Activated B cell treated with CpG ODN at 0.5 μM for 24 hours (primary cell): ENCODE measurements at regions of chr3 and their contacts with region 1.

Region 1: DNA sequence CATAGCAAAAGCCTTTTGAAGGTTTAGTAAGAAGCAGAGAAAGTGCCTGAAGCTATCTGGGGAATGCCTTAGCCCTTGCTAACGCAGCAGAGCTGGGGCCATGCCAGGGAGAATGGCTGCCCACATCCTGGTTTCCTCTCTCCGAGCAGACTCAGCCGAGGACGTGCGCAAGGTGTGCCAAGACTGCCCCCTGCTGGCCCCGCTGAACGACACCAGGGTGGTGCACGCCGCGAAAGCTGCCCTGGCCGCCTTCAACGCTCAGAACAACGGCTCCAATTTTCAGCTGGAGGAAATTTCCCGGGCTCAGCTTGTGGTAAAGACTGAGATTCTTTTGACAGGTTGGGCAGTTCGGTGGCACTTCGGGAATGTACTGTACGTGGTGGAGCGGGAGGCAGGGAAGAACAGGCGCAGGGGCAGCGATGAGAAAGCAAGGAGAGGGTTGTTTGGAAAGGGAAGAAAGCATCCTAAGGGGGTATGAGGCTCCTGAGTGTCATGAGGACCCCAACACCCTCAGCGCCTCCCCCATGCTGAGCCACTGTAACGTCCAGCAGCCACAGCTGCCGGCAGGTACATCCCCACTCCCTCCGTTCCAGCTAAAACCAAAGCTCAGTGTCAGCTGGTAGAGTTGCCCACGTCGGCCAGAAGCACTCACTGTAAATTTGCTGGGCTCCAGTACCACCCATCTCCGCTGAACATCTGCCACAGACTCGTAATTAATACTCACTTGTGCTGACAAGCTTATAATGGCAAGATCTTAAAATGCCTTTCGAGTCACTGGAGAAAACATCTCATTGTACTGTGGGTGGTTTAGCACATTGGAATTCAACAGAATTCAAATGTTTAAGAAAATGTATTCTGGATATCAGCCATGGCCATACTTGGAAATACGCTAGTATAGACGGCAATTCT is 4.4 kb downstream of the AHSG start:
- DNase-seq: peak; percentile 65
- ATAC-seq: peak; percentile 97
- H3K4me3 Mint-ChIP-seq: peak overlapping the region; percentile 58
- H3K27ac Mint-ChIP-seq: no peak overlapping the region
- H3K4me1 Mint-ChIP-seq: peaks cover 16% of the 10 kb centered on the region
- H3K27me3 Mint-ChIP-seq: peaks cover 43% of the 10 kb centered on the region
- CTCF ChIP-seq: peak; percentile 47

Region 2: GRCh38 chr3:185942907-185943759 is 674.2 kb before region 1 on chr3:
- CTCF ChIA-PET with region 1: interaction called, 31 read pairs
- POLR2A ChIA-PET with region 1: no interaction called
- intact Hi-C with region 1: loop called (anchors 1 kb)
- DNase-seq: peak; percentile 78
- ATAC-seq: peak; percentile 99
- H3K4me3 Mint-ChIP-seq: peak overlapping the region; percentile 58
- H3K27ac Mint-ChIP-seq: peak overlapping the region; percentile 61
- H3K4me1 Mint-ChIP-seq: peaks cover 16% of the 10 kb centered on the region
- H3K27me3 Mint-ChIP-seq: peaks cover 7% of the 10 kb centered on the region
- CTCF ChIP-seq: peak; percentile 99

Region 3: GRCh38 chr3:185983495-185984141 is 633.7 kb before region 1 on chr3:
- CTCF ChIA-PET with region 1: interaction called, 98 read pairs
- POLR2A ChIA-PET with region 1: interaction called, 4 read pairs
- intact Hi-C with region 1: loop called (anchors 1 kb)
- DNase-seq: peak; percentile 37
- ATAC-seq: peak; percentile 82
- H3K4me3 Mint-ChIP-seq: no peak overlapping the region
- H3K27ac Mint-ChIP-seq: peak overlapping the region; percentile 30
- H3K4me1 Mint-ChIP-seq: peaks cover 4% of the 10 kb centered on the region
- H3K27me3 Mint-ChIP-seq: peaks cover 14% of the 10 kb centered on the region
- CTCF ChIP-seq: peak; percentile 91

Region 4: GRCh38 chr3:186540221-186540834 is 77.0 kb before region 1 on chr3:
- CTCF ChIA-PET with region 1: interaction called, 24 read pairs
- POLR2A ChIA-PET with region 1: no interaction called
- intact Hi-C with region 1: loop called (anchors 1 kb)
- DNase-seq: peak; percentile 55
- ATAC-seq: peak; percentile 88
- H3K4me3 Mint-ChIP-seq: no peak overlapping the region
- H3K27ac Mint-ChIP-seq: no peak overlapping the region
- H3K4me1 Mint-ChIP-seq: peaks cover 35% of the 10 kb centered on the region
- H3K27me3 Mint-ChIP-seq: no peaks in the 10 kb centered on the region
- CTCF ChIP-seq: no peak

Region 5: GRCh38 chr3:186821429-186822367 is 204.4 kb after region 1 on chr3:
- CTCF ChIA-PET with region 1: interaction called, 187 read pairs
- POLR2A ChIA-PET with region 1: interaction called, 5 read pairs
- intact Hi-C with region 1: loop called (anchors 1 kb)
- DNase-seq: no peak
- ATAC-seq: no peak
- H3K4me3 Mint-ChIP-seq: no peak overlapping the region
- H3K27ac Mint-ChIP-seq: no peak overlapping the region
- H3K4me1 Mint-ChIP-seq: peaks cover 19% of the 10 kb centered on the region
- H3K27me3 Mint-ChIP-seq: peaks cover 16% of the 10 kb centered on the region
- CTCF ChIP-seq: peak; percentile 57

Region 6: GRCh38 chr3:186854954-186855353 is 237.7 kb after region 1 on chr3:
- CTCF ChIA-PET with region 1: no interaction called
- POLR2A ChIA-PET with region 1: no interaction called
- intact Hi-C with region 1: no loop called
- DNase-seq: no peak
- ATAC-seq: no peak
- H3K4me3 Mint-ChIP-seq: no peak overlapping the region
- H3K27ac Mint-ChIP-seq: no peak overlapping the region
- H3K4me1 Mint-ChIP-seq: peaks cover 11% of the 10 kb centered on the region
- H3K27me3 Mint-ChIP-seq: no peaks in the 10 kb centered on the region
- CTCF ChIP-seq: no peak

Region 7: DNA sequence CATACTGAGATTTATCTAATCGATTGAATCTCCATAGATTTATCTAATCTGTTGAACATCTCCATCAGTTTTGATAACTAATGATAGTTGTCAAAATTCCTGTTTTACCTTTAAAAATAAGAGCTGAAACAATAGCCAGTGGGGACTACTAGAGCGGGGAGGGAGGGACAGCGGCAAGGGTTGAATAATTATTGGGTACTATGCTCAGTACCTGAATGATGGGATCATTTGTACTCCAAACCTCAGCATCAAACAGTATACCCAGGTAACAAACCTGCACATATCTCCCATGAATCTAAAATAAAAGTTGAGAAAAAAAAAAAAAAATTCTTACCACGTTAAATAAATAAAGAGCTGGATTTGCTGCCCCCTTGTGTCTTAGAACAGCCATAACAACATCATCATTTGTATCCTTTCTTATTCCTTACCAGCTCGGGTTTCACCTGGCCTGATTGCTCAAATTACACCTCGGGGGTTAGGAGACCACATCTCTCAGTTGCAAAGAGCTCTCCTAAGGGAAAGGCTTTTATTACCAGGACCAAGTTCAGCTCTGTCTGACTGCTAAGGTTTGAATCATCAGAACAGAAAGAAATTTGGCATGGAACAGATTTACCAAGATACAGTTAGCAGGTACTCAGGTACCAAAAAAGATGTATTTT is 547.7 kb after region 1 on chr3:
- CTCF ChIA-PET with region 1: interaction called, 10 read pairs
- POLR2A ChIA-PET with region 1: no interaction called
- intact Hi-C with region 1: loop called (anchors 1 kb)
- DNase-seq: no peak
- ATAC-seq: peak; percentile 73
- H3K4me3 Mint-ChIP-seq: no peak overlapping the region
- H3K27ac Mint-ChIP-seq: no peak overlapping the region
- H3K4me1 Mint-ChIP-seq: no peaks in the 10 kb centered on the region
- H3K27me3 Mint-ChIP-seq: peaks cover 14% of the 10 kb centered on the region
- CTCF ChIP-seq: no peak

Region 8: GRCh38 chr3:187850331-187850921 is 1233.1 kb after region 1 on chr3:
- CTCF ChIA-PET with region 1: no interaction called
- POLR2A ChIA-PET with region 1: no interaction called
- intact Hi-C with region 1: no loop called
- DNase-seq: no peak
- ATAC-seq: no peak
- H3K4me3 Mint-ChIP-seq: no peak overlapping the region
- H3K27ac Mint-ChIP-seq: no peak overlapping the region
- H3K4me1 Mint-ChIP-seq: no peaks in the 10 kb centered on the region
- H3K27me3 Mint-ChIP-seq: no peaks in the 10 kb centered on the region
- CTCF ChIP-seq: no peak